Vagina (tissue), 2 donors: ENCODE measurements at regions of chrX and their contacts with region 1.

Region 1: DNA sequence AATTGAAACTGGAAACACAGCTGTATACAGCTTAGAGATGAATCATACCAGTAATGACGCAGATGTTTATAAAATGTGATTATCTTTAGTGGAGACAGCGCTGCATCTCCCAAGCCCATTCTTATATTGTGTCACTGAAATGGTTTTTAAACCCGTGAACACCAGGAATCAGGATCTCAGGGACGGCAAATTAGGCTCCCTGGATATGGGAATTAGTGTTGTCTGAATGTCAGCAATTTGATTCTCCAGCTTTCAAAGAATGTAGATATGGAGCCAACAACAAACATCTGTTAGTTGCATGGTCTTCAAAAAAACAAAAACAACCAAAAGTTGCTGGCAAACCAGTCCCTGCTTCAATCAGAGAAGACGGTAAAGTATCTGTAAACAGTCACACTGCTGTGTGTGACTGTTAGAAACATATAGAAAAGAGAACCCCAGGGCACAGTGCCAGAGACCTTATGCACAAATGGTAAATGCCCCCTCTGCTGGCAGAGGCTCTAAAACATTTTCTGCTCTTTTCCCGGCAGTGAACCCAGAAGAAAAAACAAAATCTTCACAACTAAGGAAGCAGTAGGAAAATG is 351.9 kb upstream of the FTHL17 start:
- DNase-seq: no peak
- H3K4me3 ChIP-seq: no peak overlapping the region
- H3K27ac ChIP-seq: no peak overlapping the region
- H3K4me1 ChIP-seq: no peaks in the 10 kb centered on the region
- H3K27me3 ChIP-seq: no peaks in the 10 kb centered on the region
- CTCF ChIP-seq: no peak
- POLR2A ChIP-seq: no peak

Region 2: GRCh38 chrX:31307952-31308351 is 115.7 kb before region 1 on chrX:
- intact Hi-C with region 1: no loop called
- DNase-seq: no peak
- H3K4me3 ChIP-seq: no peak overlapping the region
- H3K27ac ChIP-seq: no peak overlapping the region
- H3K4me1 ChIP-seq: no peaks in the 10 kb centered on the region
- H3K27me3 ChIP-seq: no peaks in the 10 kb centered on the region
- CTCF ChIP-seq: no peak
- POLR2A ChIP-seq: no peak

Region 3: DNA sequence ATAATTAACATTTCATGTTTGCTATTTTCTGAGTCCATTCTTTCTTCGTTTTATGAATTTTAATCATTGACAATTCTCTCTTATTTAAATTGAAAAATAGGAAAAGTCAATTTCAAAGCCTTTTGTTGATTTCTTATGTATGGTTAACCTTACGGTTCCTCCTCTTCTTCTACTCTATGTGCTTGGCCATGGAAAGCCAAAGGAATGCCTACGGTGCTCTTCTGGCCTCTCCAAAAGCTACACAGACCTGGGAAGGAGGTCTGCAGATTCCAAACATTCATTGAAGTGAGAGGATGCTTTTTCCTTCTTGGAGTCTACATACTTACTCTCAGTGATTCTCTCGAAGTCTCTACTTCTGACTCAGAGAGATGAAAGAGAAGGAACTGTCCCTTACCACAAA is 511.1 kb after region 1 on chrX:
- intact Hi-C with region 1: loop called (anchors 5 kb)
- DNase-seq: no peak
- H3K4me3 ChIP-seq: no peak overlapping the region
- H3K27ac ChIP-seq: no peak overlapping the region
- H3K4me1 ChIP-seq: no peaks in the 10 kb centered on the region
- H3K27me3 ChIP-seq: no peaks in the 10 kb centered on the region
- CTCF ChIP-seq: no peak
- POLR2A ChIP-seq: no peak